Activated naive CD4-positive, alpha-beta T cell treated with anti-CD3 and anti-CD28 coated beads for 36 hours (primary cell): ENCODE measurements at regions of chr16 and their contacts with region 1.

Region 1: GRCh38 chr16:30526823-30527635 is 663 bp upstream of the ZNF768 start:
- DNase-seq: peak; percentile 97
- H3K4me3 Mint-ChIP-seq: peak overlapping the region; percentile 72
- H3K27ac Mint-ChIP-seq: peak overlapping the region; percentile 75
- H3K4me1 Mint-ChIP-seq: peaks cover 36% of the 10 kb centered on the region
- H3K27me3 Mint-ChIP-seq: no peaks in the 10 kb centered on the region

Region 2: GRCh38 chr16:30491744-30492308 is 35.2 kb before region 1 on chr16:
- CTCF ChIA-PET with region 1: no interaction called
- intact Hi-C with region 1: loop called (anchors 2 kb)
- DNase-seq: peak; percentile 65
- H3K4me3 Mint-ChIP-seq: no peak overlapping the region
- H3K27ac Mint-ChIP-seq: peak overlapping the region; percentile 59
- H3K4me1 Mint-ChIP-seq: peaks cover 29% of the 10 kb centered on the region
- H3K27me3 Mint-ChIP-seq: no peaks in the 10 kb centered on the region

Region 3: DNA sequence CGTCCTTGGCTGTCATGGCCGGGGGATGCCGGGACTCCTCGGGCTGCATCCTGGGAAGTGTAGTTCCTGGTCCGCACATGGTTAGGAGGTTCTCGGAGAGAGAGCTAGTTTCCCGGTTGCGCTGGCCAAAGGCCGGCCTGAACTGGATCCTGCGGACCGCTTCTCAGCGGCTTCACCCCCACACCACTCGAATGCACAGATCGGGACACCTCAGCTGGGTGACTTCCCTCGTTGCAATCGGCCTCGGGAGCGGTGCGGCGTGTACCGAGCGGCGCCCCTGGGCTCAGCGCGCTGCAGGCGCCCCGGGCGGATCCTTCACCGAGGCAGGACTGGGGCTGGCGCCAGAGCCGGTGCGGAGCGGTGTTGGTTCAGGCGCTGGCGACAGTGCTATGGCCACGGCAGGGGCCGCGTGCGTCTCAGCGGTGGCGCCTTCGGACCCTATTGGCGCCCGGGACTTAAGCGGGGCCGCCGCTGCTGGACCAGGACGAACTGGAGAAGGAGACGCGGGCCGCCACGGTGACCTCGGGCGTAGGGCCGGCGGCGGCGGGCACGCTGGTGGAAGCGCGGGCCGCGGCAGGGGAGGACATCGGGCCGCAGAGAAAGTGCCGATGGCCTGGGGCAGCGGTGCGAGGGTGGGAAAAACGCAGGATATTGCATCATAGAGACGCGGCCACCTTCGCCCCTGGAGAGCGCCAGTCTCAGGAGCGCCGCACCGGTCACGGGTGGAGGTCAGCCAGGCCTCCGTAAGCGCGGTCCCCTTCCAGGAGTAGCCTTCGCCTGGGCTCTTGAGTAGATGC is 248.6 kb after region 1 on chr16:
- CTCF ChIA-PET with region 1: no interaction called
- intact Hi-C with region 1: no loop called
- DNase-seq: peak; percentile 78
- H3K4me3 Mint-ChIP-seq: peak overlapping the region; percentile 95
- H3K27ac Mint-ChIP-seq: peak overlapping the region; percentile 93
- H3K4me1 Mint-ChIP-seq: peaks cover 17% of the 10 kb centered on the region
- H3K27me3 Mint-ChIP-seq: no peaks in the 10 kb centered on the region